Ovary (tissue), 10 donors: ENCODE measurements at regions of chr6 and their contacts with region 1.

Region 1: DNA sequence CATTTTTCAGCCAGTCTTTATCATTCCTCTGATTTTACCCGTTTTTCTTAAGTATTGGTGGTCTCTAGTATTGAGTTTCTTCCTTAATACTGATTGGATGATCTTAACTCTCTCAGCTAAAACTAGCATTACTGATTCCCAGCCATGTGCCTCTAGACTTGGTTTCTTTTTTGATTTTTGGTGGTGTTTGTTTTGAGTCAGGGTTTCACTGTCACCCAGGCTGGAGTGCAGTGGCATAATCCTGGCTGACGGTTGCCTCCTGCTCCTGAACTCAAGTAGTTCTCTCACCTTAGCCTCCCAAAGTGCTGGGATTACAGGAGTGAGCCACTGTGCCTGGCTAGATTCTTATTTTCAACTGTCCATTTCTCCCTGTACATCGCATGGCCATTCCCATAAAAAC is 24.9 kb downstream of the DPPA5 start:
- DNase-seq: no peak
- H3K4me3 ChIP-seq: no peak overlapping the region
- H3K27ac ChIP-seq: no peak overlapping the region
- H3K4me1 ChIP-seq: no peaks in the 10 kb centered on the region
- H3K27me3 ChIP-seq: no peaks in the 10 kb centered on the region
- CTCF ChIP-seq: no peak
- EP300 ChIP-seq: no peak
- POLR2A ChIP-seq: no peak

Region 2: DNA sequence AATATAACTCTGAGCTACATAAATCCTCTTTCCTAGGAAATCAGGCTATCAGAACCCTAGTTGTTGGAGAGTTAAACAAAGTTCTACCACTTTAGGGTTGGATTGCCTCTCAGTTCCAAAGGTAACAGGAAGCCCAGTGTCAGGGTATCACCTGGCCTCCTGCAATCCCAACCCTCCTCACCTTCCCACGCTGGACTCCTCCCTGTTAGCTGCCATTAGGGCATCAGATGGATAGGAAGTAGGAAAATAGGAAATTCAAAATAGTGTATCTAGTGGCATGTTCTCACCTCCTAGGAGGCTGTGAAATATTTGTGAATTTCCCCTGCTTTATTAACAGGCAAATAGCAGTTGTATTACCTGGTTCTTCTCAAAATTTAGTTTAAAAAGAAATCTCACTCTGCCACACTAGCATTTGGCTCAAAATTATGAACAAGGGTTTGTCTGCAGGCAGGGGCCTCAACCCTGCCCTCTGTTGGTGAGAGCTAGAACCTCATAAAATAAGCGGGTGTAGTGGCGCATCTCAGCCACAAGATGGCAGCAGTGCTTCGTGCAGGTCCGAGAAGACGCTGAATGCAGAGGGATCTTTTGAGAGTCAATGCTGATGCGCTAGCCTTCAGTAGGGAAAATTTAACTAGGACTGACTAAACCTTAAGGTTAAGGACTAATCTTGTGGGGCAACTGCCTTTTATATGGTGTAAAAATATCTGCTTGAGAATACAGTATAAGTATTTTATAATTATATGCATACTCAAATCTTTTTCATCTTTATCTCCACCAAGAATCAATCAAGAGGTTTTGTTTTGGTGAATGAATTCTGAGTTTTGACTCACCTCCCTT is 917.1 kb before region 1 on chr6:
- intact Hi-C with region 1: loop called in 1 of 4 experiments (anchors 10 kb)
- DNase-seq: peak; percentile 37 to 81 (median 67)
- H3K4me3 ChIP-seq: no peak overlapping the region
- H3K27ac ChIP-seq: no peak overlapping the region
- H3K4me1 ChIP-seq: no peaks in the 10 kb centered on the region
- H3K27me3 ChIP-seq: no peaks in the 10 kb centered on the region
- CTCF ChIP-seq: peak; percentile 75 to 97 (median 92)
- EP300 ChIP-seq: no peak
- POLR2A ChIP-seq: no peak